Prostate gland (tissue), 2 donors: ENCODE measurements at regions of chr6 and their contacts with region 1.

Region 1: GRCh38 chr6:27132532-27133280 is 114.8 kb upstream of the PRSS16 start:
- DNase-seq: peak; percentile 95
- H3K4me3 ChIP-seq: peak overlapping the region; percentile 48 to 49
- H3K27ac ChIP-seq: peak overlapping the region; percentile 85 to 90
- H3K4me1 ChIP-seq: no peaks in the 10 kb centered on the region
- H3K27me3 ChIP-seq: no peaks in the 10 kb centered on the region
- CTCF ChIP-seq: peak in 1 of 4 experiments; percentile 4
- POLR2A ChIP-seq: peak; percentile 92

Region 2: DNA sequence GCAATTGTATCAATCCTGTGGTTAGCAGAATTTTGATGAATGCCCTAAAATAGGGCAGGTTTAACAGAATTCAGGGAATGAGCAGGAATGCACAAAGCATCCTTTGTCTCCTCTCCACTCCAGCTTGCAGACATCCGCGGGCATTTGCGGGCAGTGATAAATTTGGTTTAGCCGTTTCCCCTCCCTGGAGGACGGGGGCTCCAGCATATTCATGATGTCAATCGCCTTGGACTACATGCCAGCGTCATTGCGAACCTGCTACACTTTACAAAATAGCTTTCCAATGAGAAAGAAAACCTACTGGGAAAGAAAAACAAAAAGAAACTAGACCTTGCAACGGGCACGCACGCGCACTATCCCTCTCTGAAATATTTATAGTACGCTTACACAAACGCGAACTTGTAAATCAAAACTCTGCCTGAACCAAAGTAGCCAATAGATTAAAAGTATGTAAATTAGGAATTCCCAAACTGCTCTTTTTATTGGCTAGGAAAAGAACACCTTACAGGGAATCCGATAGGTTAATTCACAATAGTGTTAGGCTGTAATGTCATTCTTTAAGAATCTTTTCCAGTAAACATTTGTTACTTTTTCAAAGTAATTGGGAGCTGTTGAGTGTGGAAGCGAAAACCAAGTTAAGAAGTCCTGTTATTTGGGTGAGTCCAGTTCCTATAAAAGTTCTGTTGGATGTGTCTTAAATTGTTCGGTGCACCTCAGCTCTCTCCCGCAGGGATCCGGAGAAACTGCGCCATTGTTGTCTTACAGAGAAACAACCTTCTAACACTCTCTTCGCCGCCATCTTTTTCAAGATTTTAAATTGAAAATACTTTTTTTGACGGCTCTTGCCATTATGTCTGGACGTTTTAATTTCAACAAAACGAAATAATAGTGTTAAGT is 908.8 kb before region 1 on chr6:
- intact Hi-C with region 1: loop called (anchors 10 kb)
- DNase-seq: peak; percentile 84
- H3K4me3 ChIP-seq: peak overlapping the region; percentile 41 to 50
- H3K27ac ChIP-seq: peak overlapping the region; percentile 87 to 88
- H3K4me1 ChIP-seq: no peaks in the 10 kb centered on the region
- H3K27me3 ChIP-seq: no peaks in the 10 kb centered on the region
- CTCF ChIP-seq: no peak
- POLR2A ChIP-seq: peak; percentile 53

Region 3: GRCh38 chr6:27224729-27225128 is 92.0 kb after region 1 on chr6:
- intact Hi-C with region 1: no loop called
- DNase-seq: no peak
- H3K4me3 ChIP-seq: no peak overlapping the region
- H3K27ac ChIP-seq: no peak overlapping the region
- H3K4me1 ChIP-seq: no peaks in the 10 kb centered on the region
- H3K27me3 ChIP-seq: peaks cover 4% of the 10 kb centered on the region
- CTCF ChIP-seq: no peak
- POLR2A ChIP-seq: no peak